Activated CD4-positive, alpha-beta memory T cell treated with anti-CD3 and anti-CD28 coated beads for 36 hours (primary cell): ENCODE measurements at regions of chr6 and their contacts with region 1.

Region 1: DNA sequence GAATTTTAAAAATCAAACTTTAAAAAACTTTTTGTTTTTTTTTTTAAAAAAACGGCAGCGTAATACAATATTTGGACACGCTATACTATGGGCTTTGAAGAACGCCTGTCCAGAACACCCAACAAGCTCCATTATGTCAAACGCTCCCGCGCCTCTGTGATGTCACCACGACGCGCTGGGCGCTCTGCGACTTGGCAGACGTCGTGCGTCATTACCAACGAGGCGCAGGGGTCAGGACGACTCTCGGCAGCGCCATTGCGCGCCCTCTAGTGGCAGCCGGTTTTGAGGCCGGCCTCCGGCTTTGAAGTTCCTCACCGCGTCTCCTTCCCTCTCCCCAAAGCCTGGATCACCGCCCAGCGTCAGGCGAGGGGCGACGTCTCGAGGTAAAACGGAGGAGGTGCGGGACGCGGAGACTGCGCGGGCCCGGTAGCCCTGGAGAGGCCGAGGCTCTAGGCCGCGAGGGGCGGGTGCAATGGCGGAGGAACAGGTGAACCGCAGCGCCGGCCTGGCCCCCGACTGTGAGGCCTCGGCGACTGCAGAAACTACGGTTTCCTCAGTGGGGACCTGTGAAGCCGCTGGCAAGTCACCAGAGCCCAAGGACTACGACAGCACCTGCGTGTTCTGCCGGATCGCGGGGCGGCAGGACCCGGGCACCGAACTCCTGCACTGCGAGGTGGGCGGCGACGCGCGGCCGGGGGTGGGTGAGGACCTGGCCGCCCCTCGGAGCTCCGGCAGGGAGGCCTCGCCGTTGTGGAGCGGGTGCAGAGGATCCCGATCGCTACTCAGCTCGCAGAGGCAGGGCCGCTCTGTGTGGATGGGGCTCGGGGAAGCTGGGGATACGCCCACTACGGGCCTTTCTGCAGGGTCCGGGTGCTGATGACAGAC is at the start of gene HINT3:
- DNase-seq: peak; percentile 99
- H3K4me3 Mint-ChIP-seq: peak within 1 kb of the TSS; percentile 58
- H3K27ac Mint-ChIP-seq: peak within 1 kb of the TSS; percentile 43
- H3K4me1 Mint-ChIP-seq: peaks cover 6% of the 10 kb centered on the region
- H3K27me3 Mint-ChIP-seq: peaks cover 4% of the 10 kb centered on the region
- total RNA-seq, gene HINT3: 9.6 to 9.8 TPM

Region 2: DNA sequence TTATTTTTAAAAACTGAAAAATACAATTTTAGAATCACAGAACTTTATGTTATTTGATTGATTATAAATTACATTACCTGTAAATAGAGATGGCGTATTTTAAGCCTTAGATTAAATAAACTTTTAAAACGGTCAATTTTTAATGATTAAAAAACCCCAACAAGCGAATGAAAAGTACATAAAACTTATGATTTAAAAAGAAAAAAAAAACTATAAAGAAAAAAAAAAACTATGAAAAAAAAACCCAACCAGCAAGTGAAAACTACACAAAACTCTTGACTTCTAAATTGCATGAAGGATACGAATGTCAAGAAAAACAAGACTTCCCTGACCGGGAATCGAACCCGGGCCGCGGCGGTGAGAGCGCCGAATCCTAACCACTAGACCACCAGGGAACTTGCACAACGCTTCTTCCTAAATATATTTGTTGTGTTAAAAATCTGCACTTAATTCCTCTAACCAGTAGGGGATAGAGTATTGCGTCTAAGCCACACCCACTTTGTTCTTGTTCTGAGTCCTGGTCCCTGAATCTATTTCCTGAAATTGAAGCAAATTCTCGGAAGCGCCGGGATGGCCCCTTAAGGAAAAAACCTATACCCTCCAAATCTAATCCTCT is 176.7 kb before region 1 on chr6:
- CTCF ChIA-PET with region 1: interaction called, 52 read pairs
- POLR2A ChIA-PET with region 1: interaction called, 17 read pairs
- intact Hi-C with region 1: loop called (anchors 1 kb)
- DNase-seq: peak; percentile 90
- H3K4me3 Mint-ChIP-seq: no peak overlapping the region
- H3K27ac Mint-ChIP-seq: no peak overlapping the region
- H3K4me1 Mint-ChIP-seq: peaks cover 14% of the 10 kb centered on the region
- H3K27me3 Mint-ChIP-seq: no peaks in the 10 kb centered on the region

Region 3: DNA sequence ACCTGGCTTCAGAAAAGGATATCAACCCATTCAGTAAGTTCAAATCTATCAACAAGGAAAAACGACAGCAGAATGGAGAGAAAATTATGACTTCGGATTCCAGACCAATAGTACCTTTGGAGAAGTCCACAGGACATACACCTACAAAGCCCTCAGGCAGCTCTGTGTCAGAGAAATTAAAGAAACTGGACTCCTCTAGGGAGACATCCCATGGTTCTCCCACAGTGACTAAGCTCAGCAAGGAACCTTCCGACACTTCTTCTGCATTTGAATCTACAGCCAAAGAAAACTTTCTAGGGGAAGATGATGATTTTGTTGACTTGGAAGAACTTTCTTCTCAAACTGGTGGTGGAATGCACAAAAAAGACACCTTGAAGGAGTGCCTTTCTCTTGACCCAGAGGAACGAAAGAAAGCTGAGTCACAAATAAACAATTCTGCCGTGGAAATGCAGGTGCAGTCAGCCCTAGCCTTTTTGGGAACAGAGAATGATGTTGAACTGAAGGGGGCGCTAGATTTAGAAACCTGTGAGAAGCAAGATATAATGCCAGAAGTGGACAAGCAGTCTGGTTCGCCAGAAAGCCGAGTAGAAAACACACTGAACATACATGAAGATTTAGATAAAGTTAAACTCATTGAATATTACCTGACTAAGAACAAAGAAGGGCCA is 67.6 kb before region 1 on chr6:
- CTCF ChIA-PET with region 1: interaction called, 29 read pairs
- POLR2A ChIA-PET with region 1: interaction called, 3 read pairs
- intact Hi-C with region 1: loop called (anchors 1 kb)
- DNase-seq: peak; percentile 26
- H3K4me3 Mint-ChIP-seq: no peak overlapping the region
- H3K27ac Mint-ChIP-seq: no peak overlapping the region
- H3K4me1 Mint-ChIP-seq: no peaks in the 10 kb centered on the region
- H3K27me3 Mint-ChIP-seq: no peaks in the 10 kb centered on the region

Region 4: GRCh38 chr6:125913864-125914351 is 42.8 kb before region 1 on chr6:
- CTCF ChIA-PET with region 1: interaction called, 66 read pairs
- POLR2A ChIA-PET with region 1: interaction called, 5 read pairs
- intact Hi-C with region 1: loop called (anchors 1 kb)
- DNase-seq: no peak
- H3K4me3 Mint-ChIP-seq: no peak overlapping the region
- H3K27ac Mint-ChIP-seq: no peak overlapping the region
- H3K4me1 Mint-ChIP-seq: peaks cover 43% of the 10 kb centered on the region
- H3K27me3 Mint-ChIP-seq: no peaks in the 10 kb centered on the region

Region 5: GRCh38 chr6:125931733-125932450 is 24.9 kb before region 1 on chr6:
- CTCF ChIA-PET with region 1: interaction called, 22 read pairs
- POLR2A ChIA-PET with region 1: no interaction called
- intact Hi-C with region 1: no loop called
- DNase-seq: no peak
- H3K4me3 Mint-ChIP-seq: no peak overlapping the region
- H3K27ac Mint-ChIP-seq: peak overlapping the region; percentile 51
- H3K4me1 Mint-ChIP-seq: peaks cover 15% of the 10 kb centered on the region
- H3K27me3 Mint-ChIP-seq: no peaks in the 10 kb centered on the region

Region 6: DNA sequence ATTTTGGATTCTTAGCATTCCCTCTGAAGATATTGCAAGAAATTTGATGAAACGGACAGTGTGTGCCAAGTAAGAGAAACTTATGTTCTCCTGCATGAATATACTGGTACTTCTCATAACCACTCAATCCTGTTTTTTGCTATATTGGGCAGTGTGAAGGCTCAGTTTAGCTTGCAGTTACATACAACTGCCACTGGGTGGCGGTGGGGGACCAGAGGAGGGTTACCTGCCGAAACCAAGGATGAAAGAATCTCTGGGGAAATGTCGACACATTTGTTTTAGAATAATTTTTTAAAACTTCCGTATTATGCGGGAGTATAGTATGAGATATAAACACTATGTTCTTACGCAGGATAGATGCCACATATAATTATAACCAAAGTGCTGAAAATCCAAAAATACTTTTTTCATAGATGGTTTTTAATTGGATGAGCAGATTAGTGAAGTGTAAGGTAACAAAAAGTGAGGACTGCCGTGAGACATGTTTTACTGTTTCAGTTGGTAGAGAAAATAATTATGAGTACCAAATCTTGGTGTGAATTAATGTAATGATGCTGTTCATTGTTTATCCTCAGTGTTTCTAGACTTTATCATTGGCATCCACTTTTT is 39.3 kb after region 1 on chr6:
- CTCF ChIA-PET with region 1: interaction called, 10 read pairs
- POLR2A ChIA-PET with region 1: no interaction called
- intact Hi-C with region 1: no loop called
- DNase-seq: peak; percentile 74
- H3K4me3 Mint-ChIP-seq: no peak overlapping the region
- H3K27ac Mint-ChIP-seq: no peak overlapping the region
- H3K4me1 Mint-ChIP-seq: peaks cover 28% of the 10 kb centered on the region
- H3K27me3 Mint-ChIP-seq: no peaks in the 10 kb centered on the region